HCT116 (cell line): ENCODE measurements at regions of chr16 and their contacts with region 1.

Region 1: GRCh38 chr16:19113453-19114351 is at the start of gene ITPRIPL2:
- DNase-seq: peak; percentile 79
- ATAC-seq: peak; percentile 79
- H3K4me3 ChIP-seq: peak within 1 kb of the TSS; percentile 59 to 74
- H3K27ac ChIP-seq: peak within 1 kb of the TSS; percentile 99
- H3K4me1 ChIP-seq: peaks cover 51 to 82% of the 10 kb centered on the region in 2 experiments
- H3K27me3 ChIP-seq: no peaks in the 10 kb centered on the region
- CTCF ChIP-seq: no peak
- POLR2A ChIP-seq: peak; percentile 55
- RAD21 ChIP-seq: peak; percentile 14; the same call in 1 of the 2 replicates
- total RNA-seq, gene ITPRIPL2: 67.9 TPM

Region 2: GRCh38 chr16:19008245-19009187 is 105.2 kb before region 1 on chr16:
- CTCF ChIA-PET with region 1: no interaction called
- POLR2A ChIA-PET with region 1: no interaction called
- RAD21 ChIA-PET with region 1: no interaction called
- intact Hi-C with region 1: no loop called
- DNase-seq: no peak
- ATAC-seq: no peak
- H3K4me3 ChIP-seq: no peak overlapping the region
- H3K27ac ChIP-seq: no peak overlapping the region
- H3K4me1 ChIP-seq: peaks cover 6 to 19% of the 10 kb centered on the region in 2 experiments
- H3K27me3 ChIP-seq: no peaks in the 10 kb centered on the region
- CTCF ChIP-seq: no peak
- POLR2A ChIP-seq: no peak
- RAD21 ChIP-seq: no peak

Region 3: DNA sequence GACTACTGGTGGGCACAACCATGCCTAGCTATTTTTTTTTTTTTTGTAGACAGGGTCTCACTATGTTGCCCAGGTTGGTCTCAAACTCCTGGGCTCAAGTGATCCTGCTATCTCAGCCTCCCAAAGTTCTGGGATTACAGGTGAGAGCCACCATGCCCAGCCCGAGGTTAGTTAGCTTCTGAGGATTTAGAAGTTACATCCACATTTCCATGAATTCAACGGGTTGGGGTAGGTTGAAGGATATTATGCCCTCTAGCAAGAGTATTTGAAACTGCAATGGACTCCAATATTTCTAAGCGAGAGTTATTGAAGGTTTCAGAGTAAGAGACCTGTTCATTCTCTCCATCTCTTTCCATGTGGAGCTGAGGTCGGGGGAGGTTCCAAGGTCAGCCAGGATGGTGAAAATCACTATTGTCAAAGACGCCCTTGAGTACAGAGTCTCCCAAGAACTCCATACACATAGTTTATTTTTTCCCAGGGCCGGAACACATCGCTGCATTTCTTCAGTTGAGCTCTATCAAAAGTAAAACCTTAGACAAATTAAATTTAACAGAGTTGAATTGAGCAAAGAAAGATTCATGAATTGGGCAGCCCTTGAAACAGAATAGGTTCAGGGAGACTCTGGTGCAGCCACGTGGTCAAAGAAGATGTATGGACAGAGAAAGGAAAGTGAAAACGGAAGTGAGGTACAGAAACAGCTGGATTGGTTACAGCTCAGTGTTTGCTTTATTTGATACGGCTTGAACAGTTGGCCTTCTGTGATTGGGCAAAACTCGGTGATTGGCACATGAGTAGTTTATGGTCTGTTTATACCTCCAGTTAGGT is 18.9 kb before region 1 on chr16:
- CTCF ChIA-PET with region 1: interaction called, 9 read pairs
- POLR2A ChIA-PET with region 1: interaction called, 17 read pairs
- RAD21 ChIA-PET with region 1: no interaction called
- intact Hi-C with region 1: loop called (anchors 2 kb)
- DNase-seq: peak; percentile 56
- ATAC-seq: peak; percentile 76
- H3K4me3 ChIP-seq: no peak overlapping the region
- H3K27ac ChIP-seq: peak overlapping the region; percentile 78; the same call in 1 of the 2 replicates
- H3K4me1 ChIP-seq: peaks cover 24 to 42% of the 10 kb centered on the region in 2 experiments
- H3K27me3 ChIP-seq: no peaks in the 10 kb centered on the region
- CTCF ChIP-seq: peak in 2 of 3 experiments; percentile 8 to 33; a peak in 2 of 6 replicates
- POLR2A ChIP-seq: no peak
- RAD21 ChIP-seq: no peak